Lower lobe of right lung (tissue), 2 donors: ENCODE measurements at regions of chr3 and their contacts with region 1.

Region 1: DNA sequence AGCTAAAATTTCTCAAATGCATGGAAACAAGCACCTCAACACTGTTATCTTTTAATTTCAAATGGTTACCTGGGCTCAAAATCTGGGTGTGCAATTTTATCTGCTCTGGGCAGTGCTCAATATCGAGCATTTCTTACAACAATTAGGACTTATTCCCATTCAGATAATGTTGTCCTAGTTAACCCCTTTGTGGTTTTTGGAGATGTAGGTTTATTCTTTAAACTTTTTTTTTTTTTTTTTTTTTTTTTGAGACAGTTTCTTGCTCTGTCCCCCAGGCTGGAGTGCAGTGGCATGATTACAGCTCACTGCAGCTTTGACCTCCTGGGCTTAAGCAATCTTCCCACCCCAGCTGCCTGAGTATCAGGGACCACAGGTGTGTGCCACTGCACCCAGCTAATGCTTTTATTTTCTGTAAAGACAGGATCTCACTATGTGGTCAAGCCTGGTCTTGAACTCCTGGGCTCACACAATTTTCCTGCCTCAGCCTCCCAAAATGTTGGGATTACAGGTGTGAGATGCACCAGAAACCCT is 4.4 kb upstream of the ATP2C1 start:
- DNase-seq: no peak
- ATAC-seq: no peak
- H3K4me3 ChIP-seq: no peak overlapping the region
- H3K27ac ChIP-seq: no peak overlapping the region
- H3K4me1 ChIP-seq: peaks cover 5% of the 10 kb centered on the region
- H3K27me3 ChIP-seq: no peaks in the 10 kb centered on the region
- CTCF ChIP-seq: no peak

Region 2: DNA sequence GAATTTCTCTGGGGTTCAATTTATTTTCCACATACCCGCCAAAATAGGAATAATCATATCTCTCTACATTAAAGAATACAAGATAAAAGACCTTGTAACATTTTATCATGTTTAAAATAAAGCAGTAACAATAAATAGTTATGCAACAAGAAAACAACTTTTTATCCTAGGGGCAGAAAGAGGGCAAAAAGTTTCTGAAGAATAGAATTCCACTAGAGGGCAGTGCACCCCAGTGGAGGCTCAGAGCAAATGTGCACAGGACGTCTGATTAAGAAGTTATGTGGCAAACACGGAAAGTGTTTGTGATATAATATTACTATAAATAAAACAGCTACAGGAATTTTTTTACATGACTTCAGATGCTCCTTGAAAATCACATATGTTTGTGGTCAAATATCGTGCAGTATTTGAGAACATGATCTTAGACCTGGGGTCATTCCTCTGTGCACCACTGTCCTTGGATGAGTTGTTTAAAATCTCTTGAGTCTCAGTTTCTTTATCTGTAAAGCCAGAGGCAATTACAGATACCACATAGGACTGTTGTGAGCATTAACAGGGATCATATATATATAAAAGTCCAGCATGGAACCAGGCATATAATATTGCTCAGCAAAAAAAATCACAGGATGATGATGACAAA is 129.7 kb before region 1 on chr3:
- intact Hi-C with region 1: loop called (anchors 10 kb)
- DNase-seq: peak; percentile 52
- ATAC-seq: peak; percentile 86 to 88
- H3K4me3 ChIP-seq: no peak overlapping the region
- H3K27ac ChIP-seq: no peak overlapping the region
- H3K4me1 ChIP-seq: no peaks in the 10 kb centered on the region
- H3K27me3 ChIP-seq: no peaks in the 10 kb centered on the region
- CTCF ChIP-seq: peak; percentile 76

Region 3: GRCh38 chr3:131178710-131179375 is 289.4 kb after region 1 on chr3:
- intact Hi-C with region 1: no loop called
- DNase-seq: no peak
- ATAC-seq: peak in 1 of 2 donors; percentile 35
- H3K4me3 ChIP-seq: no peak overlapping the region
- H3K27ac ChIP-seq: no peak overlapping the region
- H3K4me1 ChIP-seq: no peaks in the 10 kb centered on the region
- H3K27me3 ChIP-seq: no peaks in the 10 kb centered on the region
- CTCF ChIP-seq: no peak

Region 4: DNA sequence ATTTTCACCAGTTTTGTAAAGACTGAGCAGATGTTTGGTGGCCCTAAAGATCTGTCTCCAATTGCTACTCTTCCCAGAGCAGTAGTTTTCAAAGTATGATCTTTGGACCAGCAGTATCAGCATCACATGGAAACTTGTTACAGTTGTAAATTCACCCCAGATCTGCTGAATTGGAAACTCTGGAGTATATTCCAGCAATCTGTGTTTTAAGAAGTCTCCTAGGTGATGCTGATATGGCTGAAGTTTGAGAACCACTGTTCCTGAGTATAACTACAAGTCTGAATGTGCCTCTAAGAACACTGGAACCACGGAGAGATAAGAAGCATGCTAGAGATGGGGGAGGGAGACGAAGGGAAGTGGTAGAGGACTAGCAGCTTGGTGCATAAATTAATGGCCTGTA is 537.7 kb after region 1 on chr3:
- intact Hi-C with region 1: no loop called
- DNase-seq: no peak
- ATAC-seq: no peak
- H3K4me3 ChIP-seq: no peak overlapping the region
- H3K27ac ChIP-seq: no peak overlapping the region
- H3K4me1 ChIP-seq: no peaks in the 10 kb centered on the region
- H3K27me3 ChIP-seq: no peaks in the 10 kb centered on the region
- CTCF ChIP-seq: no peak